Naive thymus-derived CD8-positive, alpha-beta T cell (primary cell): ENCODE measurements at regions of chr7 and their contacts with region 1.

Region 1: GRCh38 chr7:142788303-142789289 is 17.8 kb downstream of the PRSS2 start:
- DNase-seq: peak in 3 of 10 donors; percentile 14 to 17 (median 16)
- ATAC-seq: no peak
- H3K4me3 Mint-ChIP-seq: peak overlapping the region; percentile 86 to 99 (median 96)
- H3K27ac Mint-ChIP-seq: peak overlapping the region; percentile 96 to 100 (median 100)
- H3K4me1 Mint-ChIP-seq: peaks cover 10 to 64% (median 27%) of the 10 kb centered on the region in 4 donors
- H3K27me3 Mint-ChIP-seq: no peaks in the 10 kb centered on the region

Region 2: DNA sequence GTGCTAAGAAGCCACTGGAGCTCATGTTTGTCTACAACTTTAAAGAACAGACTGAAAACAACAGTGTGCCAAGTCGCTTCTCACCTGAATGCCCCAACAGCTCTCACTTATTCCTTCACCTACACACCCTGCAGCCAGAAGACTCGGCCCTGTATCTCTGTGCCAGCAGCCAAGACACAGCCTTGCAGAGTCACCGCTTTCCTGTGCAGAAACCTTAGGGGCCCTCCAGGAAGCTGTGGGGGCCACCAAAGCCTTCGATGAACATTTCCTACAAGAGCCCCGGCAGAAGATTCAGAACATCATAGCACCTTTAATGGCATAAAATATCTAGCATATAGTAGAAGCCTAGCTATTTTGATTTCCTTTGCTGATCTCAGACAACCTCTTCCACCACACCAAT is 442.8 kb before region 1 on chr7:
- POLR2A ChIA-PET with region 1: interaction called, 10 read pairs
- DNase-seq: peak in 8 of 10 donors; percentile 17 to 76 (median 52)
- ATAC-seq: peak; percentile 92 to 96
- H3K4me3 Mint-ChIP-seq: peak overlapping the region in 9 of 10 donors; percentile 16 to 79 (median 52)
- H3K27ac Mint-ChIP-seq: peak overlapping the region in 8 of 10 donors; percentile 0 to 72 (median 38)
- H3K4me1 Mint-ChIP-seq: peaks cover 7 to 29% (median 12%) of the 10 kb centered on the region in 4 donors
- H3K27me3 Mint-ChIP-seq: peaks cover 0 to 4% (median 1%) of the 10 kb centered on the region in 5 donors

Region 3: GRCh38 chr7:142523821-142524460 is 264.7 kb before region 1 on chr7:
- POLR2A ChIA-PET with region 1: interaction called, 14 read pairs
- DNase-seq: no peak
- ATAC-seq: no peak
- H3K4me3 Mint-ChIP-seq: no peak overlapping the region
- H3K27ac Mint-ChIP-seq: peak overlapping the region in 6 of 10 donors; percentile 5 to 71 (median 29)
- H3K4me1 Mint-ChIP-seq: peaks cover 10 to 24% (median 17%) of the 10 kb centered on the region in 4 donors
- H3K27me3 Mint-ChIP-seq: no peaks in the 10 kb centered on the region

Region 4: DNA sequence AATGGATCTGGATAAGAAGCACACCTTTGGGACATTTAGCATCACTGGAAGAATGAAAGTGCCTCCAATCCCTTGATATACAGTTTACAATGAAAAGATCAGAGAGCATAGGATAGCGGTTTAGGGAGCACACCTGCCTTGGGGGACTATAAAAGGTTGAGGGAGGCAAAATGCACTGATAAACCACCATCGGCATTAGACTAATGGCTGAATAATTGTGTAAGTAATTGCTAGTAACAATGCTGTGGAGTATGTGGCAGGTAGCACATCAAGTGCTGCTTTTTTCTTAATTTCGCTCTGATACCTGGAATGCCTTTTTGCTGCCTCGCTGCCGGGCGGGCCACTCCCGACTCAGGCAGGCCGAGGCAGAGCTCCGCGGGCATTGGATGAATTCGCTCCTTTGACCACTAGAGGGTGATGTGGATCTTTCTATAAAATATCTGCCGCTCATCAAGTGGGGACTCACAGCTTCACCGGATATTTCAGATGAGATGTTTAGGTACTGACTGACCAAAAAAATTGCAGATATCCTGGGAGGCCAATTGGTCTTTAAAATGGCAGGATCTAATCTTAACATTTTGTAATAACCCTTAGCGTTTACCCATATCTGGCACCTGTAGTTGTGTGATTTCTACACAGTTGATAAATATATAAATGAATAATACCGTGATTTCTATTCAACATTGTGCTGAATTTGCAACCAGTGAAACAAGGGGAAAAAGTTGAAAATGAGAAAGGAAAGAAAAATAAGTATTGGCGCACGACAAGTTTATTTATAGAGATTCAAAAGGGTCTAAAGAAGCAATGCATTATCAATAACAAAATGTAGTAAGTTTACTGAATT is 156.1 kb before region 1 on chr7:
- POLR2A ChIA-PET with region 1: interaction called, 53 read pairs
- DNase-seq: peak; percentile 29 to 76 (median 60)
- ATAC-seq: peak; percentile 36 to 65
- H3K4me3 Mint-ChIP-seq: peak overlapping the region in 3 of 10 donors; percentile 20 to 64 (median 34)
- H3K27ac Mint-ChIP-seq: peak overlapping the region in 7 of 10 donors; percentile 58 to 91 (median 71)
- H3K4me1 Mint-ChIP-seq: peaks cover 4 to 19% (median 9%) of the 10 kb centered on the region in 4 donors
- H3K27me3 Mint-ChIP-seq: peaks cover 0 to 6% (median 1%) of the 10 kb centered on the region in 5 donors

Region 5: DNA sequence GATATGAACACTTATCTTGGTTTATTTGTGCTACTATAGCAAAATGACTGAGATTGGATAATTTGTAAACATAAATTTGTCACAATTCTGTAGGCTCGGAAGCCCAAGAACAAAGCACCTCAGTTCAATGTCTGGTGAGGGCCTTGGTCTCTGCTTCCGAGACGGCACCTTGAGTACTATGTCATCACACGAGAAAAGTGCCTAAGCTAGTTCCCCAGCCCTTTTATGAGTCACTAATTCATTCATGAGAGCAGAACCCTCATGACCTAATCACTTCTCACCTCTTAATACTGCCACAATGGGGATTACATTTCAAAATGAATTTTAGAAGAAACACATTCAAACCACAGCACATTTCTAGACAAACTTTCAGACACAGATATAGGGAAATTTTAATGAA is 91.3 kb before region 1 on chr7:
- POLR2A ChIA-PET with region 1: no interaction called
- DNase-seq: no peak
- ATAC-seq: no peak
- H3K4me3 Mint-ChIP-seq: no peak overlapping the region
- H3K27ac Mint-ChIP-seq: peak overlapping the region in 1 of 10 donors; percentile 55
- H3K4me1 Mint-ChIP-seq: peaks cover 7 to 37% (median 30%) of the 10 kb centered on the region in 4 donors
- H3K27me3 Mint-ChIP-seq: no peaks in the 10 kb centered on the region